Body of pancreas (tissue), 4 donors: ENCODE measurements at regions of chr3 and their contacts with region 1.

Region 1: GRCh38 chr3:53072653-53073552 is 27.0 kb upstream of the SFMBT1 start:
- DNase-seq: peak; percentile 84 to 89 (median 87)
- ATAC-seq: peak; percentile 90
- H3K4me3 ChIP-seq: peak overlapping the region; percentile 47 to 86
- H3K27ac ChIP-seq: peak overlapping the region in 3 of 4 donors; percentile 69 to 81 (median 73)
- H3K4me1 ChIP-seq: peaks cover 12% of the 10 kb centered on the region
- H3K27me3 ChIP-seq: no peaks in the 10 kb centered on the region
- CTCF ChIP-seq: peak; percentile 91 to 95 (median 94)
- POLR2A ChIP-seq: peak in 2 of 3 donors; percentile 25 to 35

Region 2: DNA sequence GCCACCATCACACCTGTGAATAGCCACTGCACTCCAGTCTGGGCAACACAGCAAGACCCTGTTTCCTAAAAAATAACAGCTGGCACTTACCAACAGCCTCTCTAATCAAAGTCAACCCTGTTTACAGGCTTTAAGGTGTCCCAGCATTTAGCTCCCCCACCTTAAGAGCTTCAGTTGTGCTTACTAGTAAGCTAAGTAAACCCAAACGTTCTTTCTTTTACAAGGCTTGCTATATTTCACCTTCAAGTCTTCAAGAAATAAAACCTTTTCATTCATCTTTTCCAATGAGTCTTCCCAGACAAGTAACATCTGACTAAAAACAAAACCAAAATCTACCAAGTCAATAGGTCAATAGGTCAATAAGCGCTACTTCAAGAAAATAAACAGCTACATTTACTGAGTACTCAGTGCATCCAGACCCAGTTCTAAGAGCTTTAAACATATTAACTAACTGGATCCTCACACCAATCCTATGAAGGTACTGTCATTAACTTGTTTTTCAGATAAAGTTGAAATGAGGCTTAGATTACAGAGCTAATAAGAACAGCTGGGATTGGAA is 449.6 kb before region 1 on chr3:
- intact Hi-C with region 1: no loop called
- DNase-seq: no peak
- ATAC-seq: no peak
- H3K4me3 ChIP-seq: no peak overlapping the region
- H3K27ac ChIP-seq: no peak overlapping the region
- H3K4me1 ChIP-seq: no peaks in the 10 kb centered on the region
- H3K27me3 ChIP-seq: no peaks in the 10 kb centered on the region
- CTCF ChIP-seq: no peak
- POLR2A ChIP-seq: no peak

Region 3: GRCh38 chr3:52742418-52743041 is 330.4 kb before region 1 on chr3:
- intact Hi-C with region 1: loop called (anchors 10 kb)
- DNase-seq: no peak
- ATAC-seq: no peak
- H3K4me3 ChIP-seq: no peak overlapping the region
- H3K27ac ChIP-seq: no peak overlapping the region
- H3K4me1 ChIP-seq: no peaks in the 10 kb centered on the region
- H3K27me3 ChIP-seq: no peaks in the 10 kb centered on the region
- CTCF ChIP-seq: peak in 6 of 7 experiments; percentile 26 to 63 (median 47)
- POLR2A ChIP-seq: no peak

Region 4: GRCh38 chr3:52809662-52810377 is 263.1 kb before region 1 on chr3:
- intact Hi-C with region 1: no loop called
- DNase-seq: no peak
- ATAC-seq: no peak
- H3K4me3 ChIP-seq: no peak overlapping the region
- H3K27ac ChIP-seq: no peak overlapping the region
- H3K4me1 ChIP-seq: no peaks in the 10 kb centered on the region
- H3K27me3 ChIP-seq: no peaks in the 10 kb centered on the region
- CTCF ChIP-seq: no peak
- POLR2A ChIP-seq: no peak

Region 5: GRCh38 chr3:52851348-52851747 is 221.6 kb before region 1 on chr3:
- intact Hi-C with region 1: loop called (anchors 5 kb)
- DNase-seq: peak; percentile 38 to 48 (median 46)
- ATAC-seq: peak; percentile 74
- H3K4me3 ChIP-seq: no peak overlapping the region
- H3K27ac ChIP-seq: no peak overlapping the region
- H3K4me1 ChIP-seq: no peaks in the 10 kb centered on the region
- H3K27me3 ChIP-seq: no peaks in the 10 kb centered on the region
- CTCF ChIP-seq: peak; percentile 27 to 89 (median 77)
- POLR2A ChIP-seq: no peak

Region 6: DNA sequence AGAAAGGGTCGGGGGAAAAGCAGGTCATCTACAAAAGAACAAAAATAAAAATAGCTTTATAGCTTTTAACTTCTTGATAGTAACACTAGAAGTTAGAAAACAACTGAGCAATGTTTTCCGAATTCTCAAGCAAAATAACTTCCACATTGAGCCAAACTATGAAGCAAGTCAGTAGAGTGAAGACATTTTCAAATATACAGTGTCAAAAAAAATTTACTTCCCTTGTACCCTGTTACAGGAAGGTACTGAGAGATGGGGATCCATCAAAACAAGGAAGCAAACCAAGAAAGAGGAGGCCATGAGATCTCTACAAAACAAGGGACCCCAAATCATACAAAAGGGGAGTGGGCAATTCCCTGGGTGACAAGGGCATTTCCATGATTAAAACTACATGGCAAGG is 148.9 kb before region 1 on chr3:
- intact Hi-C with region 1: no loop called
- DNase-seq: no peak
- ATAC-seq: no peak
- H3K4me3 ChIP-seq: no peak overlapping the region
- H3K27ac ChIP-seq: peak overlapping the region in 1 of 4 donors; percentile 35
- H3K4me1 ChIP-seq: peaks cover 3% of the 10 kb centered on the region
- H3K27me3 ChIP-seq: no peaks in the 10 kb centered on the region
- CTCF ChIP-seq: no peak
- POLR2A ChIP-seq: no peak

Region 7: GRCh38 chr3:52934630-52935530 is 138.0 kb before region 1 on chr3:
- intact Hi-C with region 1: loop called (anchors 10 kb)
- DNase-seq: peak; percentile 40 to 62 (median 58)
- ATAC-seq: peak; percentile 81
- H3K4me3 ChIP-seq: no peak overlapping the region
- H3K27ac ChIP-seq: no peak overlapping the region
- H3K4me1 ChIP-seq: peaks cover 4% of the 10 kb centered on the region
- H3K27me3 ChIP-seq: no peaks in the 10 kb centered on the region
- CTCF ChIP-seq: peak; percentile 23 to 78 (median 69)
- POLR2A ChIP-seq: no peak